ENCODE measurements at regions of chr22 and their contacts with region 1.

Region 1: DNA sequence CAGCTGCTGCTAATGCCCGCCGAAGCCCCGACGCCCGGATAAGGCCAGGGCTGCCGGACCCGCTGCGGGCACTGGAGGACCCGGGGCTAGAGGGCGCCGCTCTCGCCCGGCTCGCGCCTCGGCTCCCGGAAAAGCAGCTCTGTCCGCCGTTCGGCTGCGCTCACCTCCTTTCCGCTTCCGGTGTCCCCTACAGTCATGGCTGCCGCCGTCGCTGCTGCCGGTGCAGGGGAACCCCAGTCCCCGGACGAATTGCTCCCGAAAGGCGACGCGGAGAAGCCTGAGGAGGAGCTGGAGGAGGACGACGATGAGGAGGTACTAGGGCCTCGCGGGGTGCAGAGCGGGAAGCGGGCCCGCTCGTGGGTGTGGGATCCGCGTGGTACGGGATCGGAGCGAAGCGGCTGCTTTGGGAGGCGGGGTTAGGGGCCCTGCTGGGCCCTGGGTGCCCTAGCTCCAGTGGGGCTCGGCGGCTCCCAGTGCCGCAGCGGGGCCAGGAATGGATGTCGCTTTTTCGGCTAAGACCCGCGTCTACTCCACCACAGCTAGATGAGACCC is at the start of gene TOMM22:
- DNase-seq: peak; percentile 88
- H3K4me3 ChIP-seq: peak within 1 kb of the TSS; percentile 86 to 98 (median 92)
- H3K27ac ChIP-seq: peak within 1 kb of the TSS; percentile 64
- H3K4me1 ChIP-seq: peaks cover 11% of the 10 kb centered on the region
- H3K27me3 ChIP-seq: no peaks in the 10 kb centered on the region
- CTCF ChIP-seq: peak; percentile 72 to 81
- POLR2A ChIP-seq: peak; percentile 65
- total RNA-seq, gene TOMM22: 98.6 and 98.8 TPM in 2 replicates

Region 2: GRCh38 chr22:38656256-38657044 is 25.4 kb before region 1 on chr22 and contains the starts of genes CBY1 and FAM227A:
- CTCF ChIA-PET with region 1: no interaction called
- POLR2A ChIA-PET with region 1: no interaction called
- dilution Hi-C with region 1: no loop called
- intact Hi-C with region 1: loop called (anchors 1 kb)
- DNase-seq: peak; percentile 87
- H3K4me3 ChIP-seq: peak within 1 kb of the TSS; percentile 31 to 94 (median 82)
- H3K27ac ChIP-seq: peak within 1 kb of the TSS; percentile 96
- H3K4me1 ChIP-seq: peaks cover 11% of the 10 kb centered on the region
- H3K27me3 ChIP-seq: no peaks in the 10 kb centered on the region
- CTCF ChIP-seq: no peak
- POLR2A ChIP-seq: peak; percentile 18
- total RNA-seq, gene CBY1: 34.4 and 37.0 TPM in 2 replicates
- total RNA-seq, gene FAM227A: 1.4 and 1.9 TPM in 2 replicates

Region 3: GRCh38 chr22:38696606-38697424 is 15.0 kb after region 1 on chr22:
- CTCF ChIA-PET with region 1: interaction called, 59 read pairs
- POLR2A ChIA-PET with region 1: interaction called, 4 read pairs
- dilution Hi-C with region 1: no loop called
- intact Hi-C with region 1: loop called (anchors 1 kb)
- DNase-seq: peak; percentile 92
- H3K4me3 ChIP-seq: peak overlapping the region in 1 of 3 experiments; percentile 65
- H3K27ac ChIP-seq: peak overlapping the region; percentile 75
- H3K4me1 ChIP-seq: peaks cover 65% of the 10 kb centered on the region
- H3K27me3 ChIP-seq: no peaks in the 10 kb centered on the region
- CTCF ChIP-seq: no peak
- POLR2A ChIP-seq: no peak

Region 4: DNA sequence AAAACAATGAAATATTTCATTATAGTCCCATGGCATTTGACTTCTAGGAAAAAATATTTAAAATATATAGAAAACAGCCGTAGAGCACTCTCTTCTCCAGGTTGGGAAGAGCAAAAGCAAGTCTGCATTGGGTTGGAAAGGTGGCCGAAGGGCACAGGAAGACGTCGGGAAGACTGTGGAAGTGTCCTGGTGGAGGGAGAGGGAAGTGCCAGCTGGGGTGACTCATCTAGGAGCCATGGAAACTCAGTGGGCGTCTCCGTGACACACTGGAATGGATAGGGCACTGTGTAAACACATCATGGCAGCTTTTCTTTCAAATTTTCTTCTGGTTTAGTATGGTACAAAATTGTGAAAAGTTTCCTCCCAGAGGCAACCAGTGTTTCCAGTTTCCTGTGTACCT is 36.6 kb after region 1 on chr22:
- CTCF ChIA-PET with region 1: interaction called, 10 read pairs
- POLR2A ChIA-PET with region 1: no interaction called
- dilution Hi-C with region 1: no loop called
- intact Hi-C with region 1: no loop called
- DNase-seq: peak; percentile 88
- H3K4me3 ChIP-seq: no peak overlapping the region
- H3K27ac ChIP-seq: peak overlapping the region; percentile 28
- H3K4me1 ChIP-seq: peaks cover 10% of the 10 kb centered on the region
- H3K27me3 ChIP-seq: no peaks in the 10 kb centered on the region
- CTCF ChIP-seq: peak; percentile 58 to 68
- POLR2A ChIP-seq: no peak